Activated B cell treated with CpG ODN at 0.5 μM for 24 hours (primary cell): ENCODE measurements at regions of chr2 and their contacts with region 1.

Region 1: DNA sequence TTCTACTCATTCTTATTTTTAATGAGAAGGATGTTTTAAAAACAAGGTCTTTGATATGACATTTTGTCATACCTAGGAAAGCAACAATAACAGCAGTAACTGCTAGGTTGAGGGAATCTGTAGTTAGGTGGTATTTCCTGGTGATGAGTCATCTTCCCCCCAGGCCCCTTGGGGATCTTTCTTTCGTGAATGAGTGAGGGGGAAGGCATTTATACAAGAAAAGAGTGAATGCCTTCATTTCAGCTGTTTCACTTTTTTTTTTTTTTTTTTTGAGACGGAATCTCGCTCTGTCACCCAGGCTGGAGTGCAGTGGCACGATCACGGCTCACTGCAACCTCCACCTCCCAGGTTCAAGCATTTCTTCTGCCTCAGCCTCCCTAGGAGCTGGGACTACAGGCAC is 108.6 kb downstream of the MAP4K4 start:
- DNase-seq: peak; percentile 43
- ATAC-seq: peak; percentile 88
- H3K4me3 Mint-ChIP-seq: peak overlapping the region; percentile 66
- H3K27ac Mint-ChIP-seq: peak overlapping the region; percentile 75
- H3K4me1 Mint-ChIP-seq: peaks cover 79% of the 10 kb centered on the region
- H3K27me3 Mint-ChIP-seq: no peaks in the 10 kb centered on the region
- CTCF ChIP-seq: no peak

Region 2: GRCh38 chr2:101823347-101823791 is 17.2 kb after region 1 on chr2:
- CTCF ChIA-PET with region 1: interaction called, 3 read pairs
- POLR2A ChIA-PET with region 1: interaction called, 3 read pairs
- intact Hi-C with region 1: loop called (anchors 2 kb)
- DNase-seq: no peak
- ATAC-seq: peak; percentile 86
- H3K4me3 Mint-ChIP-seq: no peak overlapping the region
- H3K27ac Mint-ChIP-seq: peak overlapping the region; percentile 57
- H3K4me1 Mint-ChIP-seq: peaks cover 68% of the 10 kb centered on the region
- H3K27me3 Mint-ChIP-seq: no peaks in the 10 kb centered on the region
- CTCF ChIP-seq: no peak

Region 3: GRCh38 chr2:101844055-101844635 is 38.0 kb after region 1 on chr2:
- CTCF ChIA-PET with region 1: no interaction called
- POLR2A ChIA-PET with region 1: no interaction called
- intact Hi-C with region 1: no loop called
- DNase-seq: no peak
- ATAC-seq: no peak
- H3K4me3 Mint-ChIP-seq: no peak overlapping the region
- H3K27ac Mint-ChIP-seq: no peak overlapping the region
- H3K4me1 Mint-ChIP-seq: peaks cover 8% of the 10 kb centered on the region
- H3K27me3 Mint-ChIP-seq: no peaks in the 10 kb centered on the region
- CTCF ChIP-seq: no peak